ENCODE measurements at regions of chr1 and their contacts with region 1.

Region 1: GRCh38 chr1:167542109-167543032 is 11.2 kb downstream of the CREG1 start:
- DNase-seq: peak; percentile 43
- H3K4me3 Mint-ChIP-seq: peak overlapping the region; percentile 15
- H3K27ac Mint-ChIP-seq: peak overlapping the region; percentile 90
- H3K4me1 Mint-ChIP-seq: peaks cover 68% of the 10 kb centered on the region
- H3K27me3 Mint-ChIP-seq: no peaks in the 10 kb centered on the region

Region 2: GRCh38 chr1:167401260-167401873 is 141.0 kb before region 1 on chr1:
- CTCF ChIA-PET with region 1: interaction called, 19 read pairs
- POLR2A ChIA-PET with region 1: interaction called, 3 read pairs
- DNase-seq: peak; percentile 57
- H3K4me3 Mint-ChIP-seq: no peak overlapping the region
- H3K27ac Mint-ChIP-seq: no peak overlapping the region
- H3K4me1 Mint-ChIP-seq: no peaks in the 10 kb centered on the region
- H3K27me3 Mint-ChIP-seq: no peaks in the 10 kb centered on the region

Region 3: DNA sequence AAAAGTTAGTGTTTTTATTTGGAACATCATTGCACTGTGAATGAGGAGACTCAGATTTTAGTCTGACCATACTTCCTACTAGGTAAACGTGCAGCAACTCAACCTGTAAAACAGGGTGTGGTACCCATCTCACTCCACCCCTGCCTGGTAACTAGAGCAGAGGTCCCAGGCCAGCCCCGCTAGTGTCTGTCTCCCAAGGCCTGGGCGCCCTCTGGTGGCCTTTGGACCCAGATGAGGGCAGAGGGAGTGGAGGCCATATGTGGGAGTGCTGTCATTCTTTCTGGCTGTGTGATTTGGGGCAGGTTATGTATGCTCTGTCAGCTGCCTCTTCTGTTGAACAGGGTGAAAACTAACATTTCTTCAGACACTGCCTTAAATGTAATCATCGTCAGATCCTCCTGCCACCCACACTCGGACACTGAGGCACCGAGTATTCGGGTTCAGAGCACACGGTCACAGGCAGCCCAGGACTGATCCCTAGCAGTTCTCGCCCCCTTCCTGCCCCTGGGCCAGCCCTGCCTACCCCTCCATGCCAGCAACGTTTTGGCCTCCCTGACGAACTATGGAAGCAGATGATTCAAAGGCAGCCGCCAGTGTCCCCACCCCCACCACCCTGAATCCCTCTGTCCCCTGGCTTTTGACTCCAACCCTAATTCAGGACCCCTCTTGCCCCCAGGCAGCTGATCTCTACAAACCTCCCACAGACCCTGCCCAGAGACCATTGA is 100.1 kb before region 1 on chr1:
- CTCF ChIA-PET with region 1: interaction called, 15 read pairs
- POLR2A ChIA-PET with region 1: no interaction called
- DNase-seq: peak; percentile 90
- H3K4me3 Mint-ChIP-seq: no peak overlapping the region
- H3K27ac Mint-ChIP-seq: peak overlapping the region; percentile 44
- H3K4me1 Mint-ChIP-seq: peaks cover 86% of the 10 kb centered on the region
- H3K27me3 Mint-ChIP-seq: no peaks in the 10 kb centered on the region

Region 4: DNA sequence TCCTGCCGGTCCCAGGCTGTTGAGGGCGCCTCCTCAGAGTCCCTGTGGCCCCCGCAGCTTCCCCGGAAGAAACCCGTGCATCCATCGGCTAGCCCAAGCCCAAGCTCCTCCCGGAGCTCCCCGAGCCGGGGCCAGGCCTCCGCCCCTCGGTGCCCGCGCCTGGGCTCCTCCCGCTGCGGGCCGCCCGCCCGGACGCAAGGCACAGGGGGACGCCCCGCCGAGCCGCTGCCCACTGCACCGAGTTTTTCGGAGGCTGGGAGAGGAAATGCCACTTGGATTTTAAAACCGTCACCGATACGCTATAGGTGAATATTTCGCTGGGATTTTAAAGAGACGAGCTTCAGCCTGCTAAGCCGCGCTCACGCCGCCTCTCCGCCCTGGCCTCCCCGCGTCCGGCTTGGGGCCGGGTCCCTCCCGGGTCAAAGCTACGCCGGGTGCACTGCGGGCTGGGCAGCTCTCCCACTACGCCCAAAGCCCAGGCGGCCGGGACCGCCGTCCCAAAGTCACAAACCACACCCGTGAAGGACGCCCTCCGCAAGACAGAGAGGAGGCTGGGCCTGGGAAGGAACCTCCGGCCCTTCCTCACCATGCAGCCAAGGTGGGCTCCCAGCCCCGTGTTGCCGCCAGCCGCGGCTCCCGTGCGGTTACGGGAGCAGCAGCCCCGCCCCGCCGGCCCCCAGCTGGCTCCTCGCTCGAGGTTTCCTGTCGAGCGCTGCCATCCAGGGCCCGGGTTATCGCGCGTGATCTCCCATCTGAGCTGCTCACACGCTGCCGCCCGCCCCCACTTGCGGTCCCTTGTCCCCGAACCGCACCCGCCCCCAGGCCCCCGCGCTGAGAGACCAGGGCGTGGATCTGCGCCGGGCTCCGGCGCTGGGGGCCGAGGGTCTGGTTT is 87.2 kb before region 1 on chr1:
- CTCF ChIA-PET with region 1: interaction called, 19 read pairs
- POLR2A ChIA-PET with region 1: interaction called, 4 read pairs
- DNase-seq: peak; percentile 85
- H3K4me3 Mint-ChIP-seq: peak overlapping the region; percentile 75
- H3K27ac Mint-ChIP-seq: peak overlapping the region; percentile 75
- H3K4me1 Mint-ChIP-seq: peaks cover 66% of the 10 kb centered on the region
- H3K27me3 Mint-ChIP-seq: no peaks in the 10 kb centered on the region

Region 5: DNA sequence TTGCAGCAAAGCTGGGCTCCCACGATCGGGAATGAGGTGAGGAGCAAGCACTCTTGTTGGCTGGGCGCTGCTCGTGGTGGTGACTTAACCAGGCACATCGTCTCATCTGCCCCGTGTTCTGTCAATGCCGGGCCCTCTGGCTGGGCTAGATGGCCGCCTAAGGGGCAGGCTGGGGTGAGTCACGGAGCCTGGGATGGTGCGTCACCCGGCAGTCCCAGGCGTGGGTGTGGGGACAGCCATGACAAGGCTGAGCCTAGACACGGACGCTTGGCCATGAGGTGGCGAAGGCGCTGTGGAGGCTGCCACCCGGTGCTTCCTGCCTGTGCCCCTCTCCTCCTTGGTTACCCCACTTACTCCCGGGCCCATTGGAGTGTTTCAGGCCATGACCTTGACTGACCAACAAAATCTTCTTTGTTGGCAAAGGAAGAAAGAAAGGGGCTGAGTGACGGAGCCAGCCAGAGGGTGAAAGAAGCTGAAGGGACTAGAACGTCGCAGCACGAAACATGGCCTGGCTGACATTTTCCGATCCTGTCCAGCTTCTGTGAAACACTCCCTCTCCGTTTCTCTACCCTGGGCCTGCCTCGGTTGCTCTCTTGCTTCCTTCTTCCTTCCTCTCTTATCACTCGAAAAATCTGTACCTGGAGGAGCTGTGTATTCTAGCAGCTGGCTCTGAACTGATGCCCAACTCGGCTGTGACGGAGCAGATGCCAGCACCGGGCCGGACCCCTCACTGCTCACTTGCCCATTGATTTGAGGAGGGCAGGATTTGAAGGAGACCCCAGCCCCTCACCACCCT is 24.6 kb before region 1 on chr1:
- CTCF ChIA-PET with region 1: interaction called, 53 read pairs
- POLR2A ChIA-PET with region 1: interaction called, 16 read pairs
- DNase-seq: peak; percentile 88
- H3K4me3 Mint-ChIP-seq: peak overlapping the region; percentile 99
- H3K27ac Mint-ChIP-seq: peak overlapping the region; percentile 99
- H3K4me1 Mint-ChIP-seq: peaks cover 45% of the 10 kb centered on the region
- H3K27me3 Mint-ChIP-seq: peaks cover 11% of the 10 kb centered on the region

Region 6: GRCh38 chr1:167553136-167554027 is 11.0 kb after region 1 on chr1 and contains the start of gene CREG1:
- CTCF ChIA-PET with region 1: interaction called, 42 read pairs
- POLR2A ChIA-PET with region 1: interaction called, 15 read pairs
- DNase-seq: peak; percentile 92
- H3K4me3 Mint-ChIP-seq: peak within 1 kb of the TSS; percentile 78
- H3K27ac Mint-ChIP-seq: peak within 1 kb of the TSS; percentile 33
- H3K4me1 Mint-ChIP-seq: peaks cover 45% of the 10 kb centered on the region
- H3K27me3 Mint-ChIP-seq: peaks cover 6% of the 10 kb centered on the region
- total RNA-seq, gene CREG1: 19.5 TPM

Region 7: DNA sequence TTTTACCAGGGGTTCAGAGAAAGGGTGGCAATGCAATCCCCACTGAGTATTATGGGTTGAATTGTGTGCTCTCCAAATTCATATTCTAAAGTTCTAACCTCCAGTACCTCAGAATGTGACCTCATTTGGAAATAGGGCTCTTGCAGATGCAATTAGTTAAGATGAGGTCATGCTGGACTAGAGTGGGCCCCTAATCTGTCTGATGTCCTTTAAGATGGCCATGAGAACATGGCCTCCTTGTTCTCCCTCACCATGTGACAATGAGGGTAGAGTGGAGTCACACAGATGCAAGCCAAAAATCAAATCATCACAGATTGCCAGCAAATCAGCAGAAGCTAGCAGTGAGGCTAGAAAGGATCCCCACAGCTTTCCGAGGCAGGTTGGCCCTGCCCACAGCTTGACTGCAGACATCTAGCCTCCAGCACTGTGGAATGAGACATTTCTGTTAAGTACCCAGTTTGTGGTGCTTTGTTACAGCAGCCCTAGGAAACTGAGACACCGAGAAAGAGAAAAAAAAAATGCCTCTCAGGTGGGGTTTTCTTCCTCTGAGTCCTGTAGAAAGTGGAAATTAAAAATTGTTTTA is 36.7 kb after region 1 on chr1:
- CTCF ChIA-PET with region 1: no interaction called
- POLR2A ChIA-PET with region 1: no interaction called
- DNase-seq: no peak
- H3K4me3 Mint-ChIP-seq: no peak overlapping the region
- H3K27ac Mint-ChIP-seq: no peak overlapping the region
- H3K4me1 Mint-ChIP-seq: no peaks in the 10 kb centered on the region
- H3K27me3 Mint-ChIP-seq: peaks cover 18% of the 10 kb centered on the region

Region 8: GRCh38 chr1:167648978-167649744 is 106.8 kb after region 1 on chr1:
- CTCF ChIA-PET with region 1: no interaction called
- POLR2A ChIA-PET with region 1: no interaction called
- DNase-seq: no peak
- H3K4me3 Mint-ChIP-seq: no peak overlapping the region
- H3K27ac Mint-ChIP-seq: peak overlapping the region; percentile 53
- H3K4me1 Mint-ChIP-seq: peaks cover 65% of the 10 kb centered on the region
- H3K27me3 Mint-ChIP-seq: no peaks in the 10 kb centered on the region